Heart right ventricle (tissue), 16 donors: ENCODE measurements at regions of chr13 and their contacts with region 1.

Region 1: GRCh38 chr13:44108331-44108858 is 228.7 kb downstream of the LACC1 start:
- DNase-seq: peak; percentile 53 to 54
- ATAC-seq: peak; percentile 56 to 95 (median 78)
- H3K4me3 ChIP-seq: no peak overlapping the region
- H3K27ac ChIP-seq: peak overlapping the region; percentile 56 to 80 (median 72)
- H3K4me1 ChIP-seq: peaks cover 14 to 80% (median 42%) of the 10 kb centered on the region in 9 donors
- H3K27me3 ChIP-seq: no peaks in the 10 kb centered on the region
- CTCF ChIP-seq: no peak

Region 2: DNA sequence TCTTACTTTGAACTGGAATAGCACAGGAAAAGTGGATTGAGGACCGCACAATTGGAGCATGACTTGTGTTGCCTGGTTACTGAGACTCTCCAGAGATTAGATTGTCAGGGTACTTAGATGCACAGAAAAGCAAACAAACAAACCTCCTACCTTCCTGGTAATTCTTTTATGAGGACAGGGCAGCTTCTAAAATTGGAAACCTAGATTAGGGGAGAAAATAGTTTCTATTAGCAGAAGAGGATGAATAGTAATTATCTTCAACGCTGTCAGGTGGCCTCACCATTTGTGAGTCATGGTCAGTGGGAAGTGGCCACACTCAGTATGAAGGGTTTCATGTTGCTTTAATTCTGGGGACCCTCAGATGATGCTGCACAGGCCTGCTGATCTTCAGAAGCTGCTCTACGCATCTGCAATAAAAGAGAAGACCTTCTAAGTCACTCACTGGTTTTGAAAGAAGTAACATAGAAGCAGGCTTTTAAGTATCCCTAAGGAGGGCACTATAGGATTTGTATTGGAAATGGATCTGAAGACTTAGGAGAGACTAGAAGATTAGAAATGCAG is 121.9 kb before region 1 on chr13:
- intact Hi-C with region 1: loop called in 2 of 10 experiments (anchors 2 to 10 kb)
- DNase-seq: peak in 1 of 2 donors; percentile 16
- ATAC-seq: peak; percentile 71 to 96 (median 90)
- H3K4me3 ChIP-seq: no peak overlapping the region
- H3K27ac ChIP-seq: peak overlapping the region; percentile 24 to 82 (median 73)
- H3K4me1 ChIP-seq: peaks cover 0 to 41% (median 18%) of the 10 kb centered on the region in 9 donors
- H3K27me3 ChIP-seq: no peaks in the 10 kb centered on the region
- CTCF ChIP-seq: peak in 4 of 9 donors; percentile 8 to 44 (median 26)

Region 3: GRCh38 chr13:44058624-44059215 is 49.7 kb before region 1 on chr13:
- intact Hi-C with region 1: loop called in 3 of 10 experiments (anchors 2 to 5 kb)
- DNase-seq: no peak
- ATAC-seq: peak in 2 of 8 donors; percentile 30 to 67
- H3K4me3 ChIP-seq: no peak overlapping the region
- H3K27ac ChIP-seq: peak overlapping the region in 5 of 10 donors; percentile 4 to 49 (median 34)
- H3K4me1 ChIP-seq: peaks cover 4 to 34% (median 12%) of the 10 kb centered on the region in 9 donors
- H3K27me3 ChIP-seq: no peaks in the 10 kb centered on the region
- CTCF ChIP-seq: no peak

Region 4: GRCh38 chr13:44068737-44069136 is 39.7 kb before region 1 on chr13:
- intact Hi-C with region 1: loop called in 2 of 10 experiments (anchors 2 to 5 kb)
- DNase-seq: no peak
- ATAC-seq: peak in 1 of 8 donors; percentile 41
- H3K4me3 ChIP-seq: no peak overlapping the region
- H3K27ac ChIP-seq: no peak overlapping the region
- H3K4me1 ChIP-seq: peaks cover 0 to 5% (median 0%) of the 10 kb centered on the region in 9 donors
- H3K27me3 ChIP-seq: no peaks in the 10 kb centered on the region
- CTCF ChIP-seq: no peak